ENCODE measurements at regions of chr16 and their contacts with region 1.

Region 1: GRCh38 chr16:81737885-81738786 is 41.0 kb upstream of the PLCG2 start:
- DNase-seq: peak; percentile 81
- ATAC-seq: peak; percentile 88

Region 2: GRCh38 chr16:81006814-81007696 is 731.1 kb before region 1 on chr16 and contains the starts of genes CENPN and CMC2:
- intact Hi-C with region 1: loop called (anchors 10 kb)
- DNase-seq: peak; percentile 99
- ATAC-seq: peak; percentile 97
- total RNA-seq, gene CENPN: 8.9 TPM
- total RNA-seq, gene CMC2: 130 TPM

Region 3: DNA sequence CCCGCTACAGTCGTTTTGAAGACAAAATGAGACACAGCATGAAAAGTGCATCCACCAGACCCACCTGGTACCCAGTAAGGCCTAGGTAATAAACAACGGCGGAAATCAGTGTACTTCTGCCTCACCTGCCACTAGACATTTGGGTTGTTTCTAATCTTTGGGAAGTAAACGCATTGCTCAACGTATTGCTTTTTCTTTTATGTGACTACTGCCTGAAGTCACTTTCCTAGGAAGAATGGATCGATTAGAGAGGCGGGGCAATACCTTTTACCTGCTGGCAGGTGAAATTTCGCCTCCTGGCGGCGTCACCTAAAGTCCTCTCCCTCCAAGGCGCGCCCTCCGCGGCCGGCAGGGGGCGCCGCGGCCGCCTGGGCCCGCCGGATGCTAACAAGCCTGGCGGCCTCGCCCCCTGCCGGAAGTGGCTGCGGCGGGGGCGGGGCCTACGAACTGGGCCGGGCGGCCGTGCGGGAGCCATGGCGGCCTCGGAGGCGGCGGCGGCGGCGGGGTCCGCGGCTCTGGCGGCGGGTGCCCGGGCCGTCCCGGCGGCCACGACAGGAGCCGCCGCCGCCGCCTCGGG is 702.6 kb before region 1 on chr16 and contains the start of gene ATMIN:
- intact Hi-C with region 1: loop called (anchors 1 kb)
- DNase-seq: peak; percentile 96
- ATAC-seq: peak; percentile 98
- total RNA-seq, gene ATMIN: 21.2 TPM

Region 4: GRCh38 chr16:81204798-81205680 is 533.1 kb before region 1 on chr16:
- intact Hi-C with region 1: loop called (anchors 10 kb)
- DNase-seq: no peak
- ATAC-seq: no peak

Region 5: GRCh38 chr16:81403616-81404373 is 334.3 kb before region 1 on chr16:
- intact Hi-C with region 1: loop called (anchors 5 kb)
- DNase-seq: peak; percentile 95
- ATAC-seq: peak; percentile 86